Activated B cell treated with CpG ODN at 0.5 μM for 24 hours (primary cell): ENCODE measurements at regions of chr2 and their contacts with region 1.

Region 1: GRCh38 chr2:231399853-231400680 is 4.6 kb downstream of the B3GNT7 start:
- DNase-seq: no peak
- ATAC-seq: no peak
- H3K4me3 Mint-ChIP-seq: no peak overlapping the region
- H3K27ac Mint-ChIP-seq: no peak overlapping the region
- H3K4me1 Mint-ChIP-seq: peaks cover 27% of the 10 kb centered on the region
- H3K27me3 Mint-ChIP-seq: no peaks in the 10 kb centered on the region
- CTCF ChIP-seq: no peak

Region 2: DNA sequence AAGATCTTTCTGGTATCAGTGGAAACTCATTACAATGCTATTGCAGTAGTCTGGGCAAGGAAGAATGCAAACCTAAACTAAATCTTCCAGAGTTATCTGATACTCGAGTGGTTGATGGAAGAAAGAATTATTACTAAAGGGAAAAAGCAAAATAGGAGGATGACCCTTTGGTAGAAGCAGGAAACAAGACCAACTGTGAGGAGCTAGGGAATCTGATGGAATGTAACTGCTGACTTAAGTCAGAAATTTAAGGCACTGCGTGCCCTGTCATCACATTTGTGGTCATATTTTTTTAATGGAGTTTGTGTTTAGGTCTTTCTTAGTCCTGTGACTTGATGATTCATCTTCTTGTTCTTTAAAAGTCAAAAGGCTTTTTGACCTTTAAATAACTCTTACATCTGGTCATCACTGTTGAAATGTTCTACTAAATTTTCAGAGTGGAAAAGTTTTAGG is 238.2 kb before region 1 on chr2:
- CTCF ChIA-PET with region 1: no interaction called
- POLR2A ChIA-PET with region 1: no interaction called
- intact Hi-C with region 1: no loop called
- DNase-seq: no peak
- ATAC-seq: no peak
- H3K4me3 Mint-ChIP-seq: no peak overlapping the region
- H3K27ac Mint-ChIP-seq: no peak overlapping the region
- H3K4me1 Mint-ChIP-seq: peaks cover 8% of the 10 kb centered on the region
- H3K27me3 Mint-ChIP-seq: no peaks in the 10 kb centered on the region
- CTCF ChIP-seq: no peak

Region 3: DNA sequence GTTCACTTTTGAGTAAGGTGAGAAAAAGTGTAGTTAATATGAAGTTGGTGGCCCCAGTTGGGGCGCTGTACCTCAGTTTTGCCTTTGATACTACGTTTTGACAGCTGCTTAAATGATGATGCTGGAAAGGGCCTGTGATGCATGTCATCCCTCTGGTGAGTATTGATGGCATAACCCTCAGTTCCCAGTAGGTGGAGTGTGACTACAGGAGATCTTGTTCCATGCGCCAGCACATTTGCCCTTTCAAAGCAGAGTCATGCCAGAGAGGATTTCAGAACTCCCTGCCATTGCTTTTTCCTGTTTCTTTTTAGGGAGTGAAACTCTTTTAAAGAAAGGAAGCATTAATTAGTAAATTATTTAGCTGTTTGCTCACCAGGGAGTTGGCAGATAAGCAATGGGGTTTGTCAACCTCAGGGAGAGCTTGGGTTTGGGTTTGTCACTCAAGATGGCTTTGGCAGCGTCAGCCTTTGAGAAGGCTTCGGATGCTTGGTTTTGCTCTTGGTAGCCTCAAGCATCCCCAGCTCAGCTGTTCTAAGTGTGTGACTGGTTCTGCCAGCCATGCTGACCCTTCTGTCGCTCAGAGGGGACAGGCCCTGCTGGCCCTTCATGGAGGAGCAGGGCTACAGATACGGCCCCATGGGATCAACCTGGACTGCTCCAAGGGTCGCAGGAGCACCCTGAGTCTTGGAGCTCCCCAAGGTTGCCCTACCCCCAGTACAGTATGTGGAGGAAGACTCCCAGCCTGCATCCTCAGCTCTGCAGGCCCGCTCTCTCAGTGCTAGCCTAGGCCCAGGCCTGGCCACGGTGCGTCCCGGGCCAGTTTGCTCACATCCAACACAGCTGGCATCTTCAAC is 172.5 kb before region 1 on chr2:
- CTCF ChIA-PET with region 1: interaction called, 50 read pairs
- POLR2A ChIA-PET with region 1: interaction called, 9 read pairs
- intact Hi-C with region 1: loop called (anchors 1 kb)
- DNase-seq: no peak
- ATAC-seq: peak; percentile 89
- H3K4me3 Mint-ChIP-seq: no peak overlapping the region
- H3K27ac Mint-ChIP-seq: no peak overlapping the region
- H3K4me1 Mint-ChIP-seq: peaks cover 24% of the 10 kb centered on the region
- H3K27me3 Mint-ChIP-seq: no peaks in the 10 kb centered on the region
- CTCF ChIP-seq: peak; percentile 23

Region 4: GRCh38 chr2:231297108-231297908 is 102.8 kb before region 1 on chr2:
- CTCF ChIA-PET with region 1: interaction called, 79 read pairs
- POLR2A ChIA-PET with region 1: interaction called, 20 read pairs
- intact Hi-C with region 1: loop called (anchors 1 kb)
- DNase-seq: peak; percentile 40
- ATAC-seq: peak; percentile 70
- H3K4me3 Mint-ChIP-seq: no peak overlapping the region
- H3K27ac Mint-ChIP-seq: peak overlapping the region; percentile 47
- H3K4me1 Mint-ChIP-seq: peaks cover 57% of the 10 kb centered on the region
- H3K27me3 Mint-ChIP-seq: no peaks in the 10 kb centered on the region
- CTCF ChIP-seq: no peak

Region 5: GRCh38 chr2:231418820-231419640 is 19.0 kb after region 1 on chr2:
- CTCF ChIA-PET with region 1: no interaction called
- POLR2A ChIA-PET with region 1: interaction called, 11 read pairs
- intact Hi-C with region 1: no loop called
- DNase-seq: no peak
- ATAC-seq: no peak
- H3K4me3 Mint-ChIP-seq: no peak overlapping the region
- H3K27ac Mint-ChIP-seq: no peak overlapping the region
- H3K4me1 Mint-ChIP-seq: no peaks in the 10 kb centered on the region
- H3K27me3 Mint-ChIP-seq: peaks cover 7% of the 10 kb centered on the region
- CTCF ChIP-seq: no peak

Region 6: DNA sequence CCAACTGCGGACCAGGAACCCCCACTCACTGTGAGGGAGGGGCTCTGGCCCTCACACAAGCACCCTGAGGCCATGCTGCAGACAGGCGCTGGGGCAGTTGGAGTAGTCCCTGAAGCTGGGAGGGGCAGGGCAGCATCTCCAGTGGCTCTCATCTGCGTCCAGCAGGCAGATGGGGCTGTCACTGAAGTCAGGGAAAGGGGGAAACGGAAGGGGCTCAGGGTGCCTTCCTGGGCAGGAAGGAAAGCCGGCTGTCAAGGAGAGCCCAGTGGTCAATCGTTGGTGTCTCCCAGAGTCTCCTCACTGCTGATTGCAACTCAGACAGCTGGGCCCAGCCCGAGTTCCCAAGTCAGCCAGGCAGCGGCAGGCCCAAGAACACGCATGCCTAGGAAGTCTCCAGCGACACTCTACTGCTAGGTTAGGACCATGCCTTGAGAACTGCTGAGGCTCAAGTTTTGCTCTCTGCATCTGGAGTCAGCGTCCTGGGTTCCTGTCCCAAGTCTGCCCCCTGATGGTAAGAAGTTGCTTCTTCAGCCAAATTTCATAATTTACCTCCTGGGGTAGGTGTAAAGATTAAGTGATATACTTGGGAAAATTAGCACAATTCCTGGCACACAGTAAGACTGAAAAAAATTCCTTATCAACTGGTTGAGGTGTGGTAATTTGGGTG is 157.6 kb after region 1 on chr2:
- CTCF ChIA-PET with region 1: no interaction called
- POLR2A ChIA-PET with region 1: no interaction called
- intact Hi-C with region 1: loop called (anchors 2 kb)
- DNase-seq: no peak
- ATAC-seq: peak; percentile 94
- H3K4me3 Mint-ChIP-seq: no peak overlapping the region
- H3K27ac Mint-ChIP-seq: no peak overlapping the region
- H3K4me1 Mint-ChIP-seq: peaks cover 20% of the 10 kb centered on the region
- H3K27me3 Mint-ChIP-seq: peaks cover 2% of the 10 kb centered on the region
- CTCF ChIP-seq: peak; percentile 27